Transverse colon (tissue), 4 donors: ENCODE measurements at regions of chrX and their contacts with region 1.

Region 1: DNA sequence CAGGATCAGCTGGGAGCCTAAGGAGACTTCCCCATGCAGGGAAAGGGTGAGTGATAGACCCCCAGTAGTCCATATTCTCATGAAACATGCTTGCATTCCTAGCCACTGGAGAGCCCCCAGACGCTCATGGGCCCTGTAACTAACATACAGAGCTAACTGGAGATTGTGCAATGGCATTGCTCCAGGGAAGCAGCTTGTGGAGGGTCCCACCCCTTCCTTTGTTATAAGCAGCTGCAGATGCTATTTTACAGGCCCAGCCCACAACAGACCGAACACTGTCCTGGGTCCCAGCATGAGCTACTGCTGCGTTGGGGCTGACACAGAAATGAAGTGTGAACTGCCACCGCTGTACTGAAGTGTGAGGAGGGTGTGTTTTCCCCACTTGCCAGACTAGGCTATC is 1465.7 kb upstream of the DIAPH2 start:
- DNase-seq: no peak
- H3K4me3 ChIP-seq: no peak overlapping the region
- H3K27ac ChIP-seq: no peak overlapping the region
- H3K4me1 ChIP-seq: no peaks in the 10 kb centered on the region
- H3K27me3 ChIP-seq: no peaks in the 10 kb centered on the region
- CTCF ChIP-seq: no peak
- EP300 ChIP-seq: no peak
- POLR2A ChIP-seq: no peak

Region 2: DNA sequence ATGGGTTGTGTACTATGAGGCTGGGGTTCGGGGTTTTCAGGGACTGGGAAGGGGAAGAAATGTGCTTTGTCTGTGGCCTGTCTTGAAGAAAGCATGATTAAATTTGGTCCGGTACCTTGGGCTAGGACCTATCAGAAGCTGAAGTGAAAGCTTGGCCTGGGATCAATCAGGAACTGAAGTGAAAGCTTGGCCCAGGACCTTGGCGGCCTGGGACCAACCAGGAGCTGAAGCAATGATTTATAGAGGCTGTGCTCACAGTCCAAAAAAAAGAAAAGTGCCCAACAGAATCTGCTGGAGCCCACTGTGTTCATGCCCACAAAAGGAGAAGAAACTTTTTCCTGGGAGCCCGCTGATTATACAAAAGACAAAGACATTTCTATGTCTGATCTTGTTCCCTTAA is 117.1 kb before region 1 on chrX:
- in situ Hi-C with region 1: loop called in 1 of 4 experiments (anchors 25 kb)
- intact Hi-C with region 1: no loop called
- DNase-seq: no peak
- H3K4me3 ChIP-seq: no peak overlapping the region
- H3K27ac ChIP-seq: no peak overlapping the region
- H3K4me1 ChIP-seq: no peaks in the 10 kb centered on the region
- H3K27me3 ChIP-seq: no peaks in the 10 kb centered on the region
- CTCF ChIP-seq: no peak
- EP300 ChIP-seq: no peak
- POLR2A ChIP-seq: no peak